Heart left ventricle (tissue), 16 donors: ENCODE measurements at regions of chr3 and their contacts with region 1.

Region 1: DNA sequence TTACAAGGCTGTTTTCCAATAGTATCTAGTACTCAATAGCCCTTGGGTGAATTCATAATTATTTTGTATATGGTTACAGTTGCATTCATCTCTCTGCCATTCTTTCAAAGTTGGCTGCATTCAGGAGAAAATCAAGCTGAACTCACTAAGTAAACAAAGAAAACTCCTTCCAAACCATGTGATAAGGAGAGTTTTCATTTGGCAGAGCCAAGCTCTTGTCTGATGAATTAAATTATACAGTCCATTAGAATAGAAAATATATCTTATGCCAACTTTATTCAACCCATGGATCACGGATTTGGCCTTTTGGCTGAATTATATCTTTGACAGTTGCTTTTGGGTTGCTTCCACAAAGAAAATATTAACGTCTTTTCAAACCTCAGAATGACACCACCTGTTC is 272.3 kb upstream of the ROBO1 start:
- DNase-seq: no peak
- ATAC-seq: no peak
- H3K4me3 ChIP-seq: no peak overlapping the region
- H3K27ac ChIP-seq: no peak overlapping the region
- H3K4me1 ChIP-seq: no peaks in the 10 kb centered on the region
- H3K27me3 ChIP-seq: no peaks in the 10 kb centered on the region
- CTCF ChIP-seq: no peak
- POLR2A ChIP-seq: no peak

Region 2: GRCh38 chr3:79684041-79684440 is 356.0 kb before region 1 on chr3:
- intact Hi-C with region 1: no loop called
- DNase-seq: no peak
- ATAC-seq: no peak
- H3K4me3 ChIP-seq: no peak overlapping the region
- H3K27ac ChIP-seq: no peak overlapping the region
- H3K4me1 ChIP-seq: no peaks in the 10 kb centered on the region
- H3K27me3 ChIP-seq: no peaks in the 10 kb centered on the region
- CTCF ChIP-seq: no peak
- POLR2A ChIP-seq: no peak

Region 3: DNA sequence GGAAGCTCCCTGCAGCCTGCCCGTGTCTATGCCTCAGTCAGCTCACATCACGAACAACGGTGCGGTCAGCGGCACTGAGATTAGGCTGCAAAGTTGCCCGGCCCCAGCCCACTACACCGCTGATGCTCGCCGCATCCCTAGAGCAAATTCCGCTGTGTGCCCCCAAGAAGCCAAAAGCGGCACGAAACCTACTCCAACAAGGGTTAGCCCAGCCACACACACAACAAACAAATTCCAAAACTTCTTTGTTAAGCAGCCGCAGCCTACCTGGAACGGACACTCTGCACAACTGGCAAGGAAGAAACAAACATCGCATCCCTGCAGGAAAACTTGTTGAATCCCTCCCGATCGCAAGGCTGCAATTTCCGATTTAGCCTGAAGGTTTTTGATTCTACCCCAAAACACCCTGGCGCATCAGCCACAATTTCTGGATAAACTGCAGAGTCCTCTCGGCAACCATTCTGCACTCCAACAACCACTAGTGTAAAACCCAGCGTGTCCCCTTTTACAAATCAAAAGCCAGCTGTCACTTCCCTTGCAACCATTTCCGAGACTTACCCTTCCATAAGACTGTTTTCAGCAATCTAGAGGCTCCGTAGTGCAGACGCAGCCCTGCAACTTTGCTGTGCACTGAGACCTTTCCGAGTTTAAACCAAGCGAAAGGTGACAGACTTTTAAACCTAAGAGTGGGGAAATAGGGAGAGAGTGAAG is 272.7 kb before region 1 on chr3:
- intact Hi-C with region 1: no loop called
- DNase-seq: no peak
- ATAC-seq: no peak
- H3K4me3 ChIP-seq: peak overlapping the region in 5 of 12 donors; percentile 1 to 33 (median 14)
- H3K27ac ChIP-seq: no peak overlapping the region
- H3K4me1 ChIP-seq: peaks cover 0 to 13% (median 0%) of the 10 kb centered on the region in 12 donors
- H3K27me3 ChIP-seq: peaks cover 0 to 54% (median 23%) of the 10 kb centered on the region in 9 donors
- CTCF ChIP-seq: no peak
- POLR2A ChIP-seq: no peak

Region 4: DNA sequence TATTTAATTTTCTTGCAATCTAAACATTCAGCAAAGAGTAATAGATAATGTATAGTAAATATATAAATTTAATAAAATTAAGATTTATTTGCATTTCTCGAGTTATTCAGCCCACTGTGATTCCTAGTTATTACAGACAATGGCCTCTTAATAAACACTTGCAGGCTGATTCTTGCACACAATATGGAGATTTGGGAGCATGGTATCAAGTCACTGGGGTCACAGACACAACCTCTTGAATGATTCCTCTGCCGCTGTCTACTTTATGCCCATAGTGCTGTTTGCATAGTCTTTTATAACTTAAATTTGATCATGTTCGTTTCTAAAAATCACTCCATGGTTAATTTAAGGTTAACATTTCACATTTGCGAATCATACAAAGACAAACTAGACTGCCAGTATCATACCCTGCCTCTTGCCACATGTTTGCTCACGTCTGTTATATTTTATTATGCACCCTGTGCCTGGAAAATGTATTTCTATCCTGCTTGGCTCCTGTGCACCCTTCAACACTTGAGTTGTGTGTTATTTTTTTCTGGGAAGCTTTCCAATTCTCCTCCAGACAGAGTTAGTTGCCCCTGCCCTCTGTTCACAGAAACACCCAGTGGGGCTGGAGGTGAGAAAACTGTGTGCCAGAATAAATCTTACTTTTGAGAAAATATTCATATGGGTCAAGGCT is 66.0 kb before region 1 on chr3:
- intact Hi-C with region 1: no loop called
- DNase-seq: peak in 2 of 5 donors; percentile 6 to 26
- ATAC-seq: peak; percentile 96 to 97 (median 97)
- H3K4me3 ChIP-seq: no peak overlapping the region
- H3K27ac ChIP-seq: peak overlapping the region in 3 of 12 donors; percentile 28 to 51 (median 35)
- H3K4me1 ChIP-seq: no peaks in the 10 kb centered on the region
- H3K27me3 ChIP-seq: no peaks in the 10 kb centered on the region
- CTCF ChIP-seq: no peak
- POLR2A ChIP-seq: no peak

Region 5: GRCh38 chr3:80060664-80061063 is 20.6 kb after region 1 on chr3:
- intact Hi-C with region 1: loop called in 1 of 10 experiments (anchors 2 kb)
- DNase-seq: no peak
- ATAC-seq: no peak
- H3K4me3 ChIP-seq: no peak overlapping the region
- H3K27ac ChIP-seq: no peak overlapping the region
- H3K4me1 ChIP-seq: no peaks in the 10 kb centered on the region
- H3K27me3 ChIP-seq: no peaks in the 10 kb centered on the region
- CTCF ChIP-seq: no peak
- POLR2A ChIP-seq: no peak

Region 6: DNA sequence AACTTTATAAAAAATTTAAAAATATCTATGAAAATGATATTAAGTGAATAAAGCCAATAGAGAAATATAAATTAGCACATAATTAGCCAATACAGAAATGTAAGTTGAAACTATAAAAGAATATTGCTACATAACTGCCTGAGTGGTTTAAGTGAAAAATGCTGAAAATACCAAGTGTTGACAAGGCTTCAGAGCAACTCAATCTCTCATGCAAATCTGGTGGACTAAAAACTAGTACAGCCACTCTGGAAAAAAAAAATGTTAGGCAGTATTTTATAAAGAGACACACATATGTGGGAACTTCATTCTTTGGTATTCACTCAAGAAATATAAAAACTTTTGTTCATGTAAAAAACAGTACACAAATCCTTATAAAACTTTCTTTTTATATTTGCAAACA is 561.4 kb after region 1 on chr3:
- intact Hi-C with region 1: no loop called
- DNase-seq: no peak
- ATAC-seq: no peak
- H3K4me3 ChIP-seq: no peak overlapping the region
- H3K27ac ChIP-seq: no peak overlapping the region
- H3K4me1 ChIP-seq: no peaks in the 10 kb centered on the region
- H3K27me3 ChIP-seq: no peaks in the 10 kb centered on the region
- CTCF ChIP-seq: no peak
- POLR2A ChIP-seq: no peak